ENCODE measurements at regions of chr4 and their contacts with region 1.

Region 1: GRCh38 chr4:173334085-173334772 is at the start of gene HMGB2:
- DNase-seq: peak; percentile 98
- CTCF ChIP-seq: no peak

Region 2: GRCh38 chr4:173318648-173319211 is 15.5 kb before region 1 on chr4:
- CTCF ChIA-PET with region 1: interaction called, 28 read pairs
- POLR2A ChIA-PET with region 1: interaction called, 4 read pairs
- DNase-seq: no peak
- CTCF ChIP-seq: peak; percentile 9

Region 3: GRCh38 chr4:173346074-173346473 is 11.8 kb after region 1 on chr4:
- CTCF ChIA-PET with region 1: interaction called, 6 read pairs
- POLR2A ChIA-PET with region 1: interaction called, 10 read pairs
- DNase-seq: no peak
- CTCF ChIP-seq: no peak

Region 4: GRCh38 chr4:173360587-173361221 is 26.5 kb after region 1 on chr4:
- CTCF ChIA-PET with region 1: interaction called, 10 read pairs
- POLR2A ChIA-PET with region 1: interaction called, 4 read pairs
- DNase-seq: no peak
- CTCF ChIP-seq: no peak

Region 5: DNA sequence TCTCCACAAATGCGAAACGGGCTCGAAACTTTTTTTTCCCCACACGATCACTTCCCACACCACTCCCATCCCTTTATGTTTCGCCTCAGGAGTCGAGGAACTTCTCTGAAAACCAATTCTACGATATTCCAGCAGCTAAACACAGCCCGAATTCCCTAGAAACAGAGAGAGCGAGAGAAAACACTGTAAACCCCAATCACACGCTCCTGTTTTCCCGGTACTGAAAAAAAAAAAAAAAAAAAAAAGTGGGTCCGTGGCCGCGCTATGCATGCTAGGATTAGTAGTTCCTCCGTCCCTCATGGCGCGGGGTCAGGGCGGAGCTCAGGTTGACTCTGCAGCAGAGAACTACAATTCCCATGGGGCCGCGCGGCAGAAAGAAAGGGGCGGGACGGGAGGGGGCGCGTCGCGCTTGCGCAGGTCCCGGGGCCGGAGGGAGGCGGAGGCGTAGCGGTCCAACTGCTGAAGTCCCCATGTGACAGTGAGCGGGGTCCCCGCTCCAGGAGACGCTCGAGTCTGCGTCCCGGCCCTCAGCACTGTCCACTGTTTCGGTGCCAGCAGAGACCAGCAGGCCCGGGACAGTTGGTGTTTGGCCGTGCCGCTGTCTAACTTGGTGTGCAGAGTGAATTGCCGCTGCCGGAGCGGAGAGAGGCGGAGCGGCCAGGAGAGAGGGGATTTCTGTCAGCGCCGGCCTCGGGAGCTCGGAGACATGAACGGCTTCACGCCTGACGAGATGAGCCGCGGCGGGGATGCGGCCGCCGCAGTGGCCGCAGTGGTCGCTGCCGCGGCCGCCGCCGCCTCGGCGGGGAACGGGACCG is 36.5 kb after region 1 on chr4 and contains the start of gene SAP30:
- CTCF ChIA-PET with region 1: interaction called, 3 read pairs
- POLR2A ChIA-PET with region 1: interaction called, 70 read pairs
- DNase-seq: peak; percentile 95
- CTCF ChIP-seq: no peak

Region 6: DNA sequence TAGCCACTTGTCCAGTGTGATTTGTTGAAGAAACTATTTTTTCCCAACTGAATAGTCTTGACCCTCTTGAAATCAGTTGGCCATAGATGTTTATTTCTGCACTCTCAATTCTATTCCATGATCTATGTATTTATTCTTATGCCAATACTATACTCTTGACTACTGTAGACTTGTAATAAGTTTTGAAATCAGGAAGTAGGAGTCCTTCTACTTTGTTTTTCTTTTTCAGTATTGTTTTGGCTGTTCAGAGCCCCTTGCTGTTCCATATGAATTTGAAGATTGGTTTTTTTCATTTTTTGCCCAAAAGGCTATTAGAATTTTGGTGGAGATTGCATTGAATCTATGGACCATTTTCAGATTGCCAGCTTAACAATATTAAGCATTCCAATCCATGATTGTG is 46.8 kb after region 1 on chr4:
- CTCF ChIA-PET with region 1: no interaction called
- POLR2A ChIA-PET with region 1: no interaction called
- DNase-seq: no peak
- CTCF ChIP-seq: no peak

Region 7: GRCh38 chr4:173436149-173436579 is 101.9 kb after region 1 on chr4:
- CTCF ChIA-PET with region 1: no interaction called
- POLR2A ChIA-PET with region 1: no interaction called
- DNase-seq: no peak
- CTCF ChIP-seq: no peak

Measured in GM10248 (cell line).